ENCODE measurements at regions of chr2 and their contacts with region 1.

Region 1: DNA sequence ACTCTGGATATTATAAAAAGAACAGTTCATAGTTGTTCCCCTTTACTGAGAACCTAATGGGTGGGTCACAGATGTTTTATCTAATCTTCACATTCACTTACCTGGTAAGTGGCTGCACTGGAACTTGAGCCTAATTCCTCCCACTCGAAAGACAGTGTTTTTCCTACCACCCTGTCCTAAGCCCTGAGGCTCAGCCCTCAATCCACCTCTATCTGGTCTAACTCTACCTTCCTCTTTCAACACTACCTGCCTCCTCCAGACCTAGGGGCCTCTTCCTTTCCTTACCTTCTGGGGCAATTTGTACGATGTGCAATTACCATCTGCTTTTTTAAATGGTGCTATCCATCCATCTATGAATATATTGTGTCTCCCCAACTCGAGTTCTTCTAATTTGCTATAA is 9.7 kb upstream of the KIF3C start:
- DNase-seq: peak in 1 of 3 donors; percentile 17
- H3K4me3 ChIP-seq: peak overlapping the region in 1 of 3 experiments; percentile 68
- H3K4me3 Mint-ChIP-seq: peak overlapping the region in 1 of 2 donors; percentile 62
- H3K27ac ChIP-seq: peak overlapping the region in 1 of 2 donors; percentile 68
- H3K27ac Mint-ChIP-seq: peak overlapping the region; percentile 86 to 95 (median 88)
- H3K4me1 ChIP-seq: peaks cover 15 to 23% of the 10 kb centered on the region in 2 donors
- H3K4me1 Mint-ChIP-seq: peaks cover 29% of the 10 kb centered on the region
- H3K27me3 ChIP-seq: no peaks in the 10 kb centered on the region
- H3K27me3 Mint-ChIP-seq: peaks cover 0 to 3% (median 0%) of the 10 kb centered on the region in 3 donors
- CTCF ChIP-seq: no peak

Region 2: GRCh38 chr2:26008822-26009566 is 17.0 kb after region 1 on chr2:
- intact Hi-C with region 1: loop called (anchors 2 kb)
- DNase-seq: peak; percentile 97 to 100 (median 98)
- H3K4me3 ChIP-seq: peak overlapping the region in 1 of 3 experiments; percentile 15
- H3K4me3 Mint-ChIP-seq: peak overlapping the region in 1 of 2 donors; percentile 56
- H3K27ac ChIP-seq: peak overlapping the region; percentile 93 to 95
- H3K27ac Mint-ChIP-seq: peak overlapping the region; percentile 95 to 100 (median 99)
- H3K4me1 ChIP-seq: peaks cover 64 to 87% of the 10 kb centered on the region in 2 donors
- H3K4me1 Mint-ChIP-seq: peaks cover 71% of the 10 kb centered on the region
- H3K27me3 ChIP-seq: no peaks in the 10 kb centered on the region
- H3K27me3 Mint-ChIP-seq: no peaks in the 10 kb centered on the region
- CTCF ChIP-seq: no peak

Region 3: DNA sequence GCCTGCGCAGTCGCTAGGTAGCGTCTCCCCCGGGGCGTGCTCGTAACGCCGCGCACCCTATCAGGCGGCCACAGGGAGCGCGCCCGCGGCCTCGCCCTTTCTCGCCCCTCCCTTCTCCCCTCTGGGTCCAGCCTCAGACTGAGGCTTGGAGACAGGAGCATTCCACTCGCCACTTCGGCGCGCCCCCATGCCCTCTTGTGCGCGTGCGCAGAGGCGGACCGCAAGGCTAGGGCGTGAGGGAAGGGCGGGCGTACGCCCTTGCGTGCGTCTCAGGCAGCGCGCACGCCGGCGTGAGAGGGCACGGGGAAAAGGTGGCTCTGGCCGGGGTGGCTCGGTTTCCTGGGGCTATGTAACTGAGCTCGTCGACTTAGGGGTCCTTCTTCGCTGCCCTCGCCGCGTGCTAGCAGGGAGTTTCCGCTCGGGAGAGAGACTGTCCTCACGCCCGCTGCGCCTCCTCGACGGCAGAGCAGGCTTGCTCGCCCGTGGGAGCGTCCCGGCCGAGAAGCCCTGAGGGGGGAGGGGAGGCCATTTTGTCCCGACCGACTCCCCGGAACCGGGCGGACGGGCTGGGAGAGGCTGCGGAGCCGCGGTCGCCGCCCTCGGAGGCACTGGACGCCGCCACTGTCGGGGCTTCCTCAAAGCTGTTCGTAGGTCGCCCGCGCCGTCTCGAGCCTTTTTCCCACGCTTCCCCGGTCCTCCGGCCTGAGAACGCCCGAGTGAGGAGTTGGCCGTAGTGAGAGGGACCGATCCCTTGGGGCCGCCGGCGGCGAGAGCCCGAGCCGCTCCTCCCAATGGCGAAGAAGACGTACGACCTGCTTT is 42.1 kb after region 1 on chr2 and contains the start of gene RAB10:
- intact Hi-C with region 1: loop called (anchors 5 kb)
- DNase-seq: peak; percentile 99 to 100 (median 99)
- H3K4me3 ChIP-seq: peak within 1 kb of the TSS; percentile 74 to 98 (median 84)
- H3K4me3 Mint-ChIP-seq: peak within 1 kb of the TSS; percentile 89 to 96
- H3K27ac ChIP-seq: peak within 1 kb of the TSS; percentile 94 to 98
- H3K27ac Mint-ChIP-seq: peak within 1 kb of the TSS; percentile 94 to 97 (median 96)
- H3K4me1 ChIP-seq: peaks cover 22 to 43% of the 10 kb centered on the region in 2 donors
- H3K4me1 Mint-ChIP-seq: peaks cover 38% of the 10 kb centered on the region
- H3K27me3 ChIP-seq: no peaks in the 10 kb centered on the region
- H3K27me3 Mint-ChIP-seq: peaks cover 0 to 7% (median 0%) of the 10 kb centered on the region in 3 donors
- CTCF ChIP-seq: no peak
- polyA plus RNA-seq, gene RAB10: 38.6 to 258 (median 202) TPM

Region 4: DNA sequence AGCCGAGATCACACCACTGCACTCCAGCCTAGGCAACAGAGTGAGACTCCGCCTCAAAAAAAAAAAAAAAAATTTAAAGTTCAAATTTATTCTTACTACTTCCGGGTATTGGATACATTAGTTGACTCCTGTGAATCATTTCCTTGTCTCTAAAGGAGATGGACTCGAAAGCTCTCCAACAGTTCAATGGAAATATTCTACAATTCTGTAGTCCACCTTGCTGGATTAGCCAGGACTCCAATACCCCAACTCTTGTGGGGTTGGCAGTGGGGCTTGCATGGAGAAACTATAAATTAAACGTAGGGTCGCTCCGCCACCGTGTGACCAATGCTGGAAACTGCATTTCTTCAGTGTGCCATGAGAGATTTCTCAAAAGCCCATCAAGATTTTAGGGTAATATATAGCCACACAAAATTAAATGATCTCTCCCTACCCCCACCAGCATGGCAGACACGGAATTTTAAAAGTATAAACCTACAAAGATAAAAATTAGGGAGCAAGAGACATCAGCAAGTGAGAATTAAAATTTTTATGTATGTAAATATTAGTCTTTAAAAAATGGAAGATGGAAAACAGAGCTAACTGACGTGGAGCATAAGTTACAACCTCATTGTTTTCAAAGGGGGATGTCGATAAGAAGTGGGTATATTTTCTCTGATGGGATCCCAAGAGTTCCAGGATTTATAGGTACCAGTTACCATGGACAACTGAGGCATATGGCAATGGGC is 153.2 kb after region 1 on chr2:
- intact Hi-C with region 1: loop called in 1 of 2 experiments (anchors 2 kb)
- DNase-seq: peak; percentile 43 to 64 (median 58)
- H3K4me3 ChIP-seq: no peak overlapping the region
- H3K4me3 Mint-ChIP-seq: peak overlapping the region in 1 of 2 donors; percentile 39
- H3K27ac ChIP-seq: no peak overlapping the region
- H3K27ac Mint-ChIP-seq: peak overlapping the region in 1 of 7 donors; percentile 37
- H3K4me1 ChIP-seq: peaks cover 12 to 16% of the 10 kb centered on the region in 2 donors
- H3K4me1 Mint-ChIP-seq: peaks cover 19% of the 10 kb centered on the region
- H3K27me3 ChIP-seq: no peaks in the 10 kb centered on the region
- H3K27me3 Mint-ChIP-seq: peaks cover 6 to 12% (median 8%) of the 10 kb centered on the region in 3 donors
- CTCF ChIP-seq: peak; percentile 83